ENCODE measurements at regions of chr2 and their contacts with region 1.

Region 1: DNA sequence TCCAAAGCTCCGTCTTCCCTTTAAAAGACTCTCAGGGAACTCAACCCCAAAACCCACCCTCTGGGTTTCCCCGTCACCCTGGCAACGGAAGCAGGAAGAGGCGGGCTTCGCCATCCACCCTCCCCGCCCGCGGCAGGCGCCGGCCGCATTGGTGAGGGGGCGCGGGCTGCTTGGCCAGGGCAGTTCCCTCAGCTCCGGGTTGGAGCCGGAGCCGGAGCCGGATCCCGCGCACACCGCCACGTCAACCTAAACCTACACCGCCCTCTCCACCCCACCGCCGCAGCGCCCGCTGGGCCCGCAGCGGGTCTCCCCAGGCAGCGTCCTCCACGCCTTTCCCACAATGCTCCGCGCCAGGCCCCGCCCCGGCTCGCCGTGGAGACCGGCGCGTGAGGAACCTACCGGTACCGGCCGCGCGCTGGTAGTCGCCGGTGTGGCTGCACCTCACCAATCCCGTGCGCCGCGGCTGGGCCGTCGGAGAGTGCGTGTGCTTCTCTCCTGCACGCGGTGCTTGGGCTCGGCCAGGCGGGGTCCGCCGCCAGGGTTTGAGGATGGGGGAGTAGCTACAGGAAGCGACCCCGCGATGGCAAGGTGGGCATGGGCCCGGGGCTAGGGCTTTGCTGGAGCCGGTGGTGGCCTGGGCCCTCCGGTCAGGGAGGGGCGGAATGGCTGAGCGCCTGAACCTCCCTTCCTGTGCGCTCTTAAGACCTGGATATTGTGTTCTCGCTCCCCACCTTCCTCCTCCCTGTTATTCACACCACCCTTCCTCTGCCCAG is at the start of gene DNAJC10:
- DNase-seq: peak; percentile 91 to 93 (median 92)
- ATAC-seq: peak; percentile 97
- H3K4me3 ChIP-seq: peak within 1 kb of the TSS; percentile 67
- H3K27ac ChIP-seq: peak within 1 kb of the TSS; percentile 69
- H3K4me1 ChIP-seq: peaks cover 8 to 11% of the 10 kb centered on the region in 2 experiments; a peak in 4 of 5 replicates
- H3K27me3 ChIP-seq: no peaks in the 10 kb centered on the region
- CTCF ChIP-seq: no peak
- EP300 ChIP-seq: peak; percentile 22; the same call in 1 of the 2 replicates
- POLR2A ChIP-seq: peak; percentile 95
- RAD21 ChIP-seq: no peak
- polyA plus RNA-seq, gene DNAJC10: 9.8 to 14.3 TPM

Region 2: DNA sequence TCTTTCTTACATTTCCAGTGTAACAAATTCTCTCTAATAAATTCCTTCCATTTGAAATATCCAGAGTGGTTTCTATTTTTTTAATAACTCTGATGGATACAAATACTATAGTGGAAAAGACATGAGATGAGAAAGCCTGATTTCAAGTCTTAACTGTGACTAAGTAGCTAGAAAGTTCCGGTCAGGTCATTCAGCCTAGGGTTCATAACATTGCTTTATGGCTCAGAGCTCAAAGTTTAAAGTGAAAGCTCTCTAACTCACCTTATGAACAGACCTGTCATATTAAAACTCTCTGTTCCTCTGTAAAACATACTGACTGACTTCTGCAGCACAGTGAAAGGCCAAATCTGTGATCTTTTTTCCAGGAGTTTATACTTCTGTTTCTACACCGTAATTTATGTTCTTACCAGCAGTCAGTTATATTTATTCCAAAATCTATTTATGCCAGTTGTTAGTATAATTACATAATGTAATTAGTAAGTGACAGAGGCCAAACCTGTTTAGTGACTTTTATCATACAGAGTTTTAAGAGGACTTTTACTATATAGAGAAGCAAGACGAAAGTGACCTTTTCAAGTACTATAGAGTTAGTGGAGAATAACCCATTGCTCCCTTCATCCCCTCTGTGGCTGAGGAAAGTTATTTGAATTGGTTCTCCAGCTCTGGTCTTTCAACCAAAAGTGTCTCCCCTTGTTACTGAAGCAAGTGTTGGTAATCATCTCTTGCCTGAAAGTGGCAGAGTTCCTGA is 170.5 kb before region 1 on chr2:
- CTCF ChIA-PET with region 1: no interaction called
- POLR2A ChIA-PET with region 1: no interaction called
- in situ Hi-C with region 1: no loop called
- intact Hi-C with region 1: no loop called
- DNase-seq: no peak
- ATAC-seq: no peak
- H3K4me3 ChIP-seq: no peak overlapping the region
- H3K27ac ChIP-seq: no peak overlapping the region
- H3K4me1 ChIP-seq: no peaks in the 10 kb centered on the region
- H3K27me3 ChIP-seq: no peaks in the 10 kb centered on the region
- CTCF ChIP-seq: no peak
- EP300 ChIP-seq: no peak
- POLR2A ChIP-seq: no peak
- RAD21 ChIP-seq: no peak

Region 3: DNA sequence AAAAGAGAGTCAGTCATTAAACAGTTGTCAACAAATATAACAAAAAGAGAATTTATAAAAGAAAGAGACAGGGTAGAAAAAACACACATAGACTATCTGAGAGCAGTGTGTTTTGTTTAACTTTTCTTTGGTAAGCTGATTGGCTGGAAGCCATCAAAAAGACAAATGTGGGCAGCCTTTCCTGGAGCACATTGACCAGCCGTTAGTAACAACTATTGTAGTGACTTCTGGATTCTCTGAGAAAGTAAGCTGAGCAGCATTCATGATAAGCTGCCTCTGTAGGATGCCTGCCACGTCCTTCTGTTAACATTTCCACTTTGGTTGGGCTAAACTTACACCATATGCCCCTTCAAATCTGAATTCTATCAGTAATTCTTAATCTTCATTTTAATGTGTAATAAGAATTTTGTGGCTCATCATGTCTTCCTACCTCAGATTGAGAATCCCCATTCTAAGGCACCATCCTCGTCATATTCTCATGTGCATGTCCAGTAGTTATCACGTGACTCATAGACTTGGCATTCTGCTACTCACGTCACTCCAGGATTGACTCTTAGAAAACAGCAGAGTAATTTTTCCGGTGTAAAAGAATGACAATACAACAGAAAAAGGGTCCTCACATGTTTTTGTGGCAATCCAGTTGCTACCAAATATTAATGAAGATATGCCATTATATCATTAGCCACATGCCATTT is 43.5 kb before region 1 on chr2:
- CTCF ChIA-PET with region 1: no interaction called
- POLR2A ChIA-PET with region 1: no interaction called
- in situ Hi-C with region 1: no loop called
- intact Hi-C with region 1: loop called (anchors 5 kb)
- DNase-seq: no peak
- ATAC-seq: no peak
- H3K4me3 ChIP-seq: no peak overlapping the region
- H3K27ac ChIP-seq: no peak overlapping the region
- H3K4me1 ChIP-seq: no peaks in the 10 kb centered on the region
- H3K27me3 ChIP-seq: peaks cover 2 to 13% of the 10 kb centered on the region in 2 experiments; a peak in 3 of 5 replicates
- CTCF ChIP-seq: no peak
- EP300 ChIP-seq: no peak
- POLR2A ChIP-seq: no peak
- RAD21 ChIP-seq: no peak

Region 4: DNA sequence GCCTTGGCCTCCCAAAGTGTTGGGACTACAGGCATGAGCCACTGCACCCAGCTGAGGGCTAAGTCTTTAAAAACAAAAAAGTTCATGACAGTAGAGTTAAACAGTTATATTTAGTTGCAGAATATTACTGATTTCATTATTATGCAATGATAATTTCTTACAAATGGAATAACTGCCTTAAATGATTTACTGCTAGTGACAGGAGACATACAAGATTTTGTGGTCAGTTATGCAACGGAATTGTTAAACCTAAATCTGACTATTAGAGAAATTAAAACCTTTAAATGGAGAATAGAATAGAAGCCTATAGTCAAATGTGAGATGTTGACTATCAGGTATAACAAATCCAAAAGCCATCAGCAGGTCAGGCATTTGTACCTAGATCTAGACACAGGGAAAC is 10.3 kb before region 1 on chr2:
- CTCF ChIA-PET with region 1: no interaction called
- POLR2A ChIA-PET with region 1: interaction called, 13 read pairs
- in situ Hi-C with region 1: no loop called
- intact Hi-C with region 1: no loop called
- DNase-seq: no peak
- ATAC-seq: no peak
- H3K4me3 ChIP-seq: no peak overlapping the region
- H3K27ac ChIP-seq: no peak overlapping the region
- H3K4me1 ChIP-seq: no peaks in the 10 kb centered on the region
- H3K27me3 ChIP-seq: peaks cover 2 to 8% of the 10 kb centered on the region in 2 experiments; a peak in 3 of 5 replicates
- CTCF ChIP-seq: no peak
- EP300 ChIP-seq: no peak
- POLR2A ChIP-seq: no peak
- RAD21 ChIP-seq: no peak